A673 (cell line): ENCODE measurements at regions of chr3 and their contacts with region 1.

Region 1: DNA sequence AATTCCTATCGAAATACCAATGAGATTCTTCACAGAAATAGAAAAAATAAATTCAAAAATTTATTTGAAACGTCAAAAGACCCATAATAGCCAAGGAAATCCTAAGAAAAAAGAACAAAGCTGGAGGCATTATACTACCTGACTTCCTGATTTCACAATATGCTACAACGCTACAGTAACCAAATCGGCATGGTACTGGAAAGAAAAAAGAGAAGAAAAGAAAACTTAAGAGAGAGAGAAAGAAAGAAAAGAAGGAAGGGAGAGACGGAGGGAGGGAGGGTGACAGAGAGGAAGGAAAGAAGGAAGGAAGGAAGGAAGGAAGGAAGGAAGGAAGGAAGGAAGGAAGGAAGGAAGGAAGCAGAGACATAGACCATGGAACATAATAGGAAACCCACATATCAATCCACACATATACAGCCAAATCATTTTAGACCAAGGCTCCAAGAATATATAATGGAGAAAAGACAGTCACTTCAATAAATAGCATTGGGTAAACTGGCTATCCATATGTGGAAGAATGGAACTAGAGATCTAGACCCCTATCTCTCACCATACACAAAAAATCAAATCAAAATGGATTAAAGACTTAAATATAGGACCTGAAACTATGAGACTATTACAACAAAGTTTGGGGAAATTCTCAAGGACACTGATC is 118.6 kb upstream of the CNTN4 start:
- DNase-seq: peak; percentile 69
- H3K4me3 ChIP-seq: no peak overlapping the region
- H3K27ac ChIP-seq: peak overlapping the region; percentile 75
- H3K4me1 ChIP-seq: no peaks in the 10 kb centered on the region
- H3K27me3 ChIP-seq: no peaks in the 10 kb centered on the region
- CTCF ChIP-seq: no peak

Region 2: GRCh38 chr3:1330107-1330506 is 650.0 kb before region 1 on chr3:
- CTCF ChIA-PET with region 1: no interaction called
- POLR2A ChIA-PET with region 1: no interaction called
- intact Hi-C with region 1: loop called (anchors 1 kb)
- DNase-seq: no peak
- H3K4me3 ChIP-seq: no peak overlapping the region
- H3K27ac ChIP-seq: no peak overlapping the region
- H3K4me1 ChIP-seq: peaks cover 23% of the 10 kb centered on the region
- H3K27me3 ChIP-seq: no peaks in the 10 kb centered on the region
- CTCF ChIP-seq: no peak

Region 3: DNA sequence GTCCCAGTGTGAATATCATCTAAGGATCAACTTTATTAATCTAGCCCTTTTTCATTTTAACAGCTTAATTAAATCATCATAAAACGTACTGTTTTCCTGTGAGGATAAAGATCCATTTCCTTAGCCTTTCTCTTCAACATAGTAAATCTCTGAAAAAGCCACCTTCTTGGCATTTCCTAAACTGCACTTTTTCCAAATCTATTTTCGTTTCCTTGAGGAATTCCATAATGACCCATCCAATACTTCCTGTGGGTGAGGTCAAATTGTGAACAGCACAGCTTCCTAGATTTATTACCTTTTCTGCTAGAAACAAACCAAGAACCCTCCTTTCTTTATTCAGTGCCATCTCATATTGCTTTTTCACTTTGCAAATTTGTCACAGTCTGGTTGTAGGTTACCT is 10.8 kb before region 1 on chr3:
- CTCF ChIA-PET with region 1: no interaction called
- POLR2A ChIA-PET with region 1: no interaction called
- intact Hi-C with region 1: loop called (anchors 1 kb)
- DNase-seq: peak; percentile 54
- H3K4me3 ChIP-seq: no peak overlapping the region
- H3K27ac ChIP-seq: peak overlapping the region; percentile 70
- H3K4me1 ChIP-seq: peaks cover 26% of the 10 kb centered on the region
- H3K27me3 ChIP-seq: no peaks in the 10 kb centered on the region
- CTCF ChIP-seq: no peak